T-cell (primary cell): ENCODE measurements at regions of chr17 and their contacts with region 1.

Region 1: DNA sequence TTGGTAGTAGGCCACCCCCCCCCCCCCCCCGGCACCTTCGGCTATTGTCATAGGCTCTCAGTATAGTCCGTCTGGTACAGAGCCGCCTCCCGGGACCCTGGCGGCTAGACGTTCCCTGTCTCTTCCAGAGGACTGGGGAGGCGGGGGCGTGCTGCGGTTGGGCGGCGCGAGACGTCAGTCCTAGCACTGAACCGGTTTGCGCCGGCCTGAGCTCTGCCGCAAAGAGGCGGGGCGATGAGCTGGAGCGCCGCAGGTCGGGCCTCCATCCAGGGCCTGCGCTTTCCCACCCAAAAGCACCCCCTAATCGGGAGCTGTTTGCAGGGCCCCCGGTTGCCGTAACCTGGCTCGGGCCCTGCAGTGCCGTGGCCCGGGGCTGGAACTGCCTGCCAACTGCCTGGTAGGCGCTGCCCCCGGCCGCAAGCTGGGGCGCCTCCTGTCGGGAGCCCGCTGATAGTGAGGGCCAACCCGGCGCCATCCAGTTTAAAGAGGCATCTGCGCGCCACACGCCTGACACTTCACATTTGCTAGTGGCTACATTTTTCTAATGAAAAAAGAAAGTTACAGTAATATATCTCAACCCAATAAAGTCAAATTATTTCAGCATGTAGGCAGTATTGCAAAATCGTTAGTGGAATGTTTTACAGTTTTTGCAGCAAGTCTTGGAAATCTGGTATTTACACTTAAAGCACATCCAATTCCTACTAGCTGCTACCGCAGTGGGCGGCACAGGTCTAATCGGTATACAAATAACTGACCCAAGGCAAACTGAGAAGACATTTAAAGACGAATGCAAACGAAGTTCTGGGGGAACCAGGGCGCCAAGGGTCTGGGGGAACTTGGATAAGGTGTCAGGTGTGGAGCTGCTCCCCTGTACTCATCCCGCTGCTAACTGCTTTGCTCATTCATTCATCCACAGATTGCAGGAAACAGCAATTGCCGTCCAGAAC is 748 bp upstream of the USP22 start:
- DNase-seq: peak in 29 of 35 experiments; percentile 84 to 97 (median 95)
- ATAC-seq: peak; percentile 78 to 86 (median 80)
- H3K4me3 ChIP-seq: peak overlapping the region; percentile 61 to 75
- H3K4me3 Mint-ChIP-seq: peak overlapping the region; percentile 71 to 97 (median 81)
- H3K27ac ChIP-seq: peak overlapping the region; percentile 91
- H3K27ac Mint-ChIP-seq: peak overlapping the region; percentile 94 to 95
- H3K4me1 ChIP-seq: peaks cover 22 to 37% of the 10 kb centered on the region in 2 experiments
- H3K4me1 Mint-ChIP-seq: peaks cover 30 to 35% (median 34%) of the 10 kb centered on the region in 3 donors
- H3K27me3 ChIP-seq: no peaks in the 10 kb centered on the region
- H3K27me3 Mint-ChIP-seq: peaks cover 0 to 2% of the 10 kb centered on the region in 2 donors

Region 2: DNA sequence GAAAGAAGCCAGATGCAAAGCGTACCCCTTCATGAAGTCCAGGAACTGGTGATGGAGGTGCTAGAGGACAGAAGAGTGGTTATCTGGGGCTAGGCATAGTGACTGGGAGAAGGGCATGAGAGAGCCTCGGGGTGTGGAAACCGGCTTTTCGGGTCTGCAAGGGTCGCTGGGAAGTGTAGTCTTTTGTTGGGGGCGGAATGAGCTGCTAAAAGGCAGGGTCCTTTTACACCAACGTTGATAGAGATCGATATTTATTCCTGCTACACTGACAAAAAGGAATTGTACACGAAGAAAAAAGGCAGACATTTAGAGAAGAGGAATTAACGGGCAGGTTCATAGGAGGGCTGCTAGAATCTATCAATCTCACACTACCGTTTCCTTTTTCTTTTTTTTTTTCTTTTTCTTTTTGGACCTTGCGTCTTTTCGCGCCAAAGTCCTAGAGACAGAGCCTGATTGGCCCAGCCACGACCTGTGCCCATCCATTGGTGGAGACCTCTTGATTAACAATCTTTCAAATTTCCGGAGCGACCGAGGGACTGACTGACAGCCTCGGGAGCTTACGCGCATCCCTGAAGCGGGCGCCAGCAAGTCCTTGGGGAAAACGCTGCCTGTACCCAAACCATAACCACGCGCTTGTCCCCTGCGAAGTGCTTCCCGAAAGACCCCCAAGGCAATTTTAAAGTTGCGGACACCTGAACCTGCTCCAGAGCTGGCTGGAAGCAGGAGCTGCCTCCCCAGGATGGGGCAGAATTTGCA is 55.6 kb after region 1 on chr17:
- CTCF ChIA-PET with region 1: interaction called, 3 to 13 read pairs
- POLR2A ChIA-PET with region 1: interaction called in 1 of 2 experiments, 6 read pairs
- DNase-seq: peak; percentile 9 to 83 (median 54)
- ATAC-seq: peak; percentile 97 to 99 (median 98)
- H3K4me3 ChIP-seq: peak overlapping the region; percentile 51 to 91
- H3K4me3 Mint-ChIP-seq: peak overlapping the region; percentile 83 to 95 (median 85)
- H3K27ac ChIP-seq: no peak overlapping the region
- H3K27ac Mint-ChIP-seq: no peak overlapping the region
- H3K4me1 ChIP-seq: peaks cover 0 to 20% of the 10 kb centered on the region in 2 experiments
- H3K4me1 Mint-ChIP-seq: peaks cover 12 to 16% (median 13%) of the 10 kb centered on the region in 3 donors
- H3K27me3 ChIP-seq: no peaks in the 10 kb centered on the region
- H3K27me3 Mint-ChIP-seq: no peaks in the 10 kb centered on the region

Region 3: GRCh38 chr17:21330436-21331160 is 287.0 kb after region 1 on chr17:
- CTCF ChIA-PET with region 1: no interaction called
- POLR2A ChIA-PET with region 1: no interaction called
- DNase-seq: no peak
- ATAC-seq: no peak
- H3K4me3 ChIP-seq: no peak overlapping the region
- H3K4me3 Mint-ChIP-seq: no peak overlapping the region
- H3K27ac ChIP-seq: no peak overlapping the region
- H3K27ac Mint-ChIP-seq: no peak overlapping the region
- H3K4me1 ChIP-seq: no peaks in the 10 kb centered on the region
- H3K4me1 Mint-ChIP-seq: peaks cover 0 to 2% (median under 1%) of the 10 kb centered on the region in 3 donors
- H3K27me3 ChIP-seq: peaks cover 0 to 3% of the 10 kb centered on the region in 2 experiments
- H3K27me3 Mint-ChIP-seq: peaks cover 1 to 5% of the 10 kb centered on the region in 2 donors

Region 4: DNA sequence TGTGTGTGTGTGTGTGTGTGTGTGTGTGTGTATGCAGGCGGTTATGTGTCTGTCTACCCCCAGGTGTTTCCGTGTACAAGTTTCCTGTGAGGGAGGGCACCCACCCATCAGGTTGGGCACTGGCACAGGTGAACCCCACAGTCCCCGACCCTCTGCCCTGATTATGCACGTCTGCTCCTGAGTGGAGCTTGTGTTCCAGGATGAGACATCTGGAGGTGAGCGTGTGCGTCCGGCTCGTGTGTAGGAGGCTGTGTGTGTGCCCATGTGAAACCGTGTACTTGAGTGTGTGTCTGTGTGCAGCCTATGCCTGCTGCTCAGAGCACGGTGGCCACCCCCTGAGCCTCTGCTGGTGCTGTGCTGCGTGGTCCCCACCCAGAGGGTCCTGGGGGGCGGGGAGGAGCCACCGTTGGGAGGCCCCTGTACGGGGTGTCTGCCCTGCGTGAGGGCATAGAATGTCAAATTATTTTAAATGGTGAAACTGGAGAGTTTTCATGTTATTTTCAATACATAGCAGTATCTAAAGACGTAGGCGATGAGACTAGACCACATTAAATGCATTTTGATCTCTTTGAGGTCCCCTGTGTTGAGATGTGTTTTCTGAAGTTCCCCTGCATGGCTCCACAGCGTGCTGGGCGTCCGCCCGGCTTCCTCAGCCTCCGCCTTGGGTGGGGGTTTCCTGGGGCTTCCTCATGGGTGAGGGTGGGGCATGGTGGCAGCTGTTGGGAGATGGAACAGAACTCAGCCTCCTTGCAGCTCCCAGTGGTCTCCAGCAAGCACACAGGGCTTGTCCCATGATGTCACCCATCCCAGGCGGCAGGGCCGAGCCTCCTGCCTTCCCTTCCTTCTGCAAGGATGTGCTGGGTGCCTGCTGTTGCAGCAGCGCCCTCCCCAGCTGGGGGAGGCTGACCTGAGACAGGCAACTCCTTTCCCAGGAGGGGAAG is 376.0 kb after region 1 on chr17:
- CTCF ChIA-PET with region 1: no interaction called
- POLR2A ChIA-PET with region 1: interaction called in 1 of 2 experiments, 10 read pairs
- DNase-seq: peak; percentile 29 to 89 (median 71)
- ATAC-seq: peak; percentile 77 to 91 (median 86)
- H3K4me3 ChIP-seq: peak overlapping the region; percentile 39 to 46
- H3K4me3 Mint-ChIP-seq: peak overlapping the region; percentile 59 to 80 (median 75)
- H3K27ac ChIP-seq: peak overlapping the region; percentile 69
- H3K27ac Mint-ChIP-seq: peak overlapping the region; percentile 75 to 80
- H3K4me1 ChIP-seq: peaks cover 15 to 44% of the 10 kb centered on the region in 2 experiments
- H3K4me1 Mint-ChIP-seq: peaks cover 22 to 30% (median 25%) of the 10 kb centered on the region in 3 donors
- H3K27me3 ChIP-seq: peaks cover 0 to 30% of the 10 kb centered on the region in 2 experiments
- H3K27me3 Mint-ChIP-seq: peaks cover 0 to 2% of the 10 kb centered on the region in 2 donors